ENCODE measurements at regions of chr2 and their contacts with region 1.

Region 1: DNA sequence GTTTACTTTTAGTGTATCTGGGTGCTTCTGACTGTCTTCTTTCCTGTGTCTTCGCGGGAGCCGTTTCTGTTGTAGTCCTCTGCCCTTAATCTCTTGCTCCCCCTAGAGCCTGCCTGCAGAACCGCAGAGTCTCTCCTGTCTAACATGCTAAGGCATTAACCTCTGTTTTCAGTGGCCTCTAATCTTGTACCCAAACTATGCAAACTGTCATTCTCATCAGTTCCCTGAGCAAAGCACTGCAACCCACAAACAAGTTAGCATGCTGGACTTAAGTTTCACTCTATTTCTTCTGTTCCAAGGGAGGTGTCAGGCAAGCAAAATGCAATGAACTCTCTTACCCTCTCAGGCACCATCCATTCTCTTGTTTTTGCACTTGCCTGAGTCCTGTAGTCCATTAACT is 138.4 kb downstream of the OTX1 start:
- DNase-seq: peak; percentile 12
- ATAC-seq: peak; percentile 99
- H3K4me3 ChIP-seq: no peak overlapping the region
- H3K27ac ChIP-seq: no peak overlapping the region
- H3K4me1 ChIP-seq: no peaks in the 10 kb centered on the region; the same call in 1 of the 2 replicates
- H3K27me3 ChIP-seq: no peaks in the 10 kb centered on the region
- CTCF ChIP-seq: peak; percentile 80 to 92 (median 83)
- EP300 ChIP-seq: no peak
- POLR2A ChIP-seq: no peak
- RAD21 ChIP-seq: peak; percentile 63

Region 2: GRCh38 chr2:62956651-62957050 is 232.4 kb before region 1 on chr2:
- CTCF ChIA-PET with region 1: no interaction called
- POLR2A ChIA-PET with region 1: no interaction called
- RAD21 ChIA-PET with region 1: no interaction called
- SMC1A ChIA-PET with region 1: interaction called, 3 read pairs
- in situ Hi-C with region 1: no loop called
- intact Hi-C with region 1: loop called (anchors 10 kb)
- DNase-seq: no peak
- ATAC-seq: no peak
- H3K4me3 ChIP-seq: no peak overlapping the region
- H3K27ac ChIP-seq: no peak overlapping the region
- H3K4me1 ChIP-seq: no peaks in the 10 kb centered on the region
- H3K27me3 ChIP-seq: no peaks in the 10 kb centered on the region
- CTCF ChIP-seq: no peak
- EP300 ChIP-seq: no peak
- POLR2A ChIP-seq: no peak
- RAD21 ChIP-seq: no peak

Region 3: DNA sequence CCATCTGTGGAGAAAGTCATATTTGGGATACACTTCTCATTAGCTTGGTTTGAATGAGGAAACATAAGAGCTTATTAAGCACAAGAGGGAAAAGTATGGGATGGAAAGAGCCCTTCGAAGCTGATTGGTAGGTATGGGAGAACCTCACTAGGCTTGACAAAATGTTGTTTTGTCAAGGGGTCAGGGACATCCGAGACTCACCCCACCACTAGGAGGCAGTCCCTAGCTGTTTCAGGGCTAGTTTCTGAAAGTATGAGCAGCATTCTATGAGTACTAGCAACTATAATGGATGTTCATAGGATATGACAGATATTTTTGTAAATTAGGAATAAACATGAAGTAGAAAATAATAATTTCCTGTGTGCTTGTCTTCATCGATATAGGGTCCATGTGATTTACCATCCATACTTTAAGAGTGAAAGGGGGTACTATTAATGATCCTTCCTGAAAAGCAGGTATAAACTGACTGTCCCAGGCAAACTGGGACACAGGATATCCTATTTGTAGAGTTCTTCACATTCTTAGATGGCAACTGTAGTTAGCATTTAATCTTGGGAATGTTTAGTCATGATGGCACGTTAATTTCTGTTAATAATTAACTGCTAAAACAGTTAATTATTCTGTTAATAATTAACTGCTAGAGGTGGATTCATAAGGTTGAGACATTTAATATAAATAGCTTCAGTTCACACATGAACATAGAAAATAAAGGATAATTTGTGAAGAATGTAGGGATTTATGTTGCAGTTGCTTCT is 110.0 kb before region 1 on chr2:
- CTCF ChIA-PET with region 1: interaction called, 16 read pairs
- POLR2A ChIA-PET with region 1: no interaction called
- RAD21 ChIA-PET with region 1: interaction called, 4 read pairs
- SMC1A ChIA-PET with region 1: interaction called, 4 read pairs
- in situ Hi-C with region 1: no loop called
- intact Hi-C with region 1: no loop called
- DNase-seq: no peak
- ATAC-seq: peak; percentile 88
- H3K4me3 ChIP-seq: no peak overlapping the region
- H3K27ac ChIP-seq: no peak overlapping the region
- H3K4me1 ChIP-seq: no peaks in the 10 kb centered on the region
- H3K27me3 ChIP-seq: no peaks in the 10 kb centered on the region
- CTCF ChIP-seq: peak; percentile 40 to 71 (median 54)
- EP300 ChIP-seq: no peak
- POLR2A ChIP-seq: no peak
- RAD21 ChIP-seq: peak; percentile 61